ENCODE measurements at regions of chr4 and their contacts with region 1.

Region 1: DNA sequence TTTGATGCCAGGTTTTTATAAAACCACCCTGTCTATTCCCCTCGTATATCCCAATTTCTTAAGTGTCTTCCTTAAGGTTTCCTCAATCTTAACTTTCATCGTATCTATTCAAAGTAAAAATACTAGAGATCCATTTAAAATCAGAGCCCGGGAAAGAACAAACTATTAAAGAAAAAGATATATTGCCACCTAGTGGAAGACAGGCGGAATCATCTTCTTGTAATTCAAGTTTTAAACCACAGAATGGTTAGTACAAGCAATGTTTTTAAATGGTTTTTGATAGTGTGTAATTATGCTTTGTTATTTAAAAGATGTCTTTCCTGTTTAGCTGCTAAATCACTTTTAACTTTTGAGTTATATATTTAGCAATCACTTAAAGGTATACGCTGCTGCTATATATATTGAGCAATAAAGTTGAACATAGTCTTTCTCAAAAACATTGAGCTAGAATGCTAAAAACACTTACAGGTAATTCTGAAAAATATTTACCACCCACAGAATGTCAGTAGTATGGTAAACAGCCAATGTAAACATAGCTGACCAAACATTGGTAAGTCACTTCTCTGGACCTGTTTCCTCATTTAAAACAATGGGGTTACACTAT is 18.2 kb downstream of the PRDM8 start:
- DNase-seq: no peak
- H3K4me3 ChIP-seq: peak overlapping the region in 1 of 59 donors; percentile 24
- H3K27ac ChIP-seq: no peak overlapping the region
- H3K27me3 ChIP-seq: peaks cover 0 to 41% (median 0%) of the 10 kb centered on the region in 45 donors
- CTCF ChIP-seq: peak; percentile 70 to 94 (median 81)

Region 2: GRCh38 chr4:78938868-78939666 is 1276.5 kb before region 1 on chr4 and contains the start of gene PAQR3:
- intact Hi-C with region 1: loop called in 1 of 2 experiments (anchors 10 kb)
- DNase-seq: peak; percentile 56 to 90 (median 74)
- H3K4me3 ChIP-seq: peak within 1 kb of the TSS; percentile 67 to 98 (median 92)
- H3K27ac ChIP-seq: peak within 1 kb of the TSS in 52 of 59 donors; percentile 1 to 89 (median 72)
- H3K27me3 ChIP-seq: no peaks in the 10 kb centered on the region
- CTCF ChIP-seq: peak in 12 of 56 donors; percentile 7 to 27 (median 20)
- total RNA-seq, gene PAQR3: 22.7 to 60.0 (median 43.0) TPM

Region 3: DNA sequence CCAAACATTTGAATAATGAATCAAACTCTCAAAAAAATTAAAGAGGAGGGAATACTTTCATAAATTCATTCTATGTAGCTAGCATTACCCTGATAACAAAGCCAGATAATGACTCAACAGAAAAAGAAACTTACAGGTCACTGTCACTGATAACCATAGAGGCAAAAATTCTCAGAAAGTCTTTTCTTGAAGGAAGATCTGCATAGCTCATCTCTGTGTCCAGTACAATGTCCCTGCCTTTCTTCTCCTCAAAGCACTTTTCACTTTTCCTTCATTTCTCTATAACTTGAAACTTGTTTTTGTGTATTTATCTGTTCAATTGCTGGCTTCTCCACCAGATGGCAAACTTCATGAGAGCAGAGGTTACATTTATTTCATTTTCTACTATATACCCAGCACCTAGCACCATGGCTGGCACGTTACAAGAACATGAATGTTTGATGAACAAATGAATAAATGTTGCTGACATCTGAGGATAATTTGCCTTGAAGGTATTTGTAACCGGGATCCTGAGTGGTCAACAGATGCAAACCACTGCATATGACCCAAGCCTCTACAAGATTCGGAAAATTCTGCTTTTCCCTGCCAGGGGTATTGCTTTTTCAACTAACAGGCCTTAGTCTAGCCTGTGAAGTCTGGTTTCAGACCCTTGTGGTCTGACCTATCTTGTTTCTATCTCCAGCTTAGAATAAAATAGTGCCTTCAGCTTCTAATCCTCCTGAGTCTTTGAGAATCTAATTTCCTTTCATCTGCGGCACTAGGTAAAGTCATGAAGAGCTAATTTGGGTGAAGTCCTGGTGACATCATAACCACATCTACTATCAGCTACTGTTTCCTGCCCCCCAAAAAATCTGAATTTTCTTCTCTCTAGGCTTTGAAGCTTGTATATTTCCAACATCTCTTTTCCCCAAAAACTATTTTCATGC is 90.0 kb before region 1 on chr4:
- intact Hi-C with region 1: loop called in 1 of 2 experiments (anchors 5 kb)
- DNase-seq: no peak
- H3K4me3 ChIP-seq: no peak overlapping the region
- H3K27ac ChIP-seq: no peak overlapping the region
- H3K27me3 ChIP-seq: peaks cover 0 to 8% (median 0%) of the 10 kb centered on the region in 45 donors
- CTCF ChIP-seq: peak in 49 of 56 donors; percentile 15 to 66 (median 36)

Region 4: GRCh38 chr4:80309294-80310004 is 93.9 kb after region 1 on chr4:
- intact Hi-C with region 1: no loop called
- DNase-seq: no peak
- H3K4me3 ChIP-seq: no peak overlapping the region
- H3K27ac ChIP-seq: no peak overlapping the region
- H3K27me3 ChIP-seq: peaks cover 0 to 39% (median under 1%) of the 10 kb centered on the region in 45 donors
- CTCF ChIP-seq: no peak

Measured in dorsolateral prefrontal cortex (tissue), 120 donors.